K562 (cell line): ENCODE measurements at regions of chr1 and their contacts with region 1.

Region 1: DNA sequence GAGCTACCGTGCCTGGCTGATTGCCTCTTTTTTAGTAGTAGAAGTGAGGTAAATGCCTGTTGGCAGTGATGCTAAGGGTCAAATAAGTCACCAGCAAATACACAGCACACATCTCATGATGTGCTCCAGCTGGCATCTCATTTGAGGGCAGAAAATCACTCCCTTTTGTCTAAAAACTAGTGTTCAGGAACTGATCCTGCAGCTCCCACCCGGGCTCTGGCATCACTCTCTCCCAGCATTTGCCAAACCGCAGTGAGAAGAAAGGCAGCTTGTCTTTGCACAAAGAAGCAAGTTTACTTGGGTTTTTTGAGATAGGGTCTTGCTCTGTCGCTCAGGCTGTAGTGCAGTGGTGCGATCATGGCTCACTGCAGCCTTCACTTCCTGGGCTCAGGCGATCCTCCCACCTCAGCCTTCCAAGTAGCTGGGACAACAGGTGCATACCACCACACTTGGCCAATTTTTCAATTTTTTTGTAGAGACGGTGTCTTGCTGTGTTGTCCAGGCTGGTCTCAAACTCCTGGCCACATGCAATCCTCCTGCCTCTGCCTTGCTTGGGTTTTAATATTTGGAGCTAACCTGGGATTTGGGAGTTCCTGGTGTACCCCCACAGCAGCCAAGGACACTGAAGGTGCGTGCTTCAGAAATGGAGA is 4.1 kb downstream of the RBP7 start:
- DNase-seq: no peak
- ATAC-seq: no peak
- H3K4me3 ChIP-seq: no peak overlapping the region
- H3K27ac ChIP-seq: no peak overlapping the region
- H3K4me1 ChIP-seq: peaks cover 0 to 12% of the 10 kb centered on the region in 2 experiments; a peak in 1 of 5 replicates
- H3K27me3 ChIP-seq: peaks cover 22 to 52% of the 10 kb centered on the region in 2 experiments
- CTCF ChIP-seq: no peak
- EP300 ChIP-seq: no peak
- POLR2A ChIP-seq: no peak
- RAD21 ChIP-seq: no peak

Region 2: GRCh38 chr1:9990944-9991343 is 10.2 kb before region 1 on chr1:
- CTCF ChIA-PET with region 1: no interaction called
- POLR2A ChIA-PET with region 1: interaction called, 11 read pairs
- in situ Hi-C with region 1: no loop called
- intact Hi-C with region 1: no loop called
- DNase-seq: no peak
- ATAC-seq: no peak
- H3K4me3 ChIP-seq: no peak overlapping the region
- H3K27ac ChIP-seq: no peak overlapping the region
- H3K4me1 ChIP-seq: no peaks in the 10 kb centered on the region
- H3K27me3 ChIP-seq: peaks cover 6 to 12% of the 10 kb centered on the region in 2 experiments; a peak in 4 of 5 replicates
- CTCF ChIP-seq: no peak
- EP300 ChIP-seq: no peak
- POLR2A ChIP-seq: no peak
- RAD21 ChIP-seq: no peak